ENCODE measurements at regions of chr15 and their contacts with region 1.

Region 1: DNA sequence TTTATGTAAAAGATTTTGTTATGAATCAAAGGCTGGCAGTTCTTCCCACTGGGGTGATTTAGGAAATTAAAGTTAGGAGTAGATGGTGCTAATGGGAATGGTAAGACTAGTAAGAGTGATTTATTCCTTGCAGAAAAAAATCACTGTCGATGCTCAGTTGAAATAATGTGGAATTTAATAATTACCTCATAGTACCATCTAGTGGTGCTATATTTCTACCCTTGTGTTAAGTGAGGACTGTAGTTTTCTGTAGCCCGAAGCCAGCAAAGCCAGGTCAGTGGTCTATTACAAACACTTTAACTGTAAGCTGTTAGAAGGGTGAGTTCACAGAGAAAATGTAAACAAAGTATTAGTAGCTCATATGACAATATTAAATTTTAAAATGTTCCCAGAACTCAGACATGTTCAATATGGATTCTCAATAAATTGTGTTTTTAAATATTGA is 39.5 kb upstream of the GOLGA8J start:
- DNase-seq: no peak
- H3K4me3 ChIP-seq: no peak overlapping the region
- H3K27ac ChIP-seq: no peak overlapping the region
- H3K4me1 ChIP-seq: no peaks in the 10 kb centered on the region
- H3K27me3 ChIP-seq: no peaks in the 10 kb centered on the region
- CTCF ChIP-seq: peak; percentile 36 to 53 (median 45)
- POLR2A ChIP-seq: no peak

Region 2: GRCh38 chr15:29674661-29675533 is 368.3 kb before region 1 on chr15:
- intact Hi-C with region 1: loop called (anchors 10 kb)
- DNase-seq: peak; percentile 29 to 39
- H3K4me3 ChIP-seq: peak overlapping the region; percentile 27 to 44
- H3K27ac ChIP-seq: no peak overlapping the region
- H3K4me1 ChIP-seq: no peaks in the 10 kb centered on the region
- H3K27me3 ChIP-seq: no peaks in the 10 kb centered on the region
- CTCF ChIP-seq: no peak
- POLR2A ChIP-seq: no peak

Region 3: DNA sequence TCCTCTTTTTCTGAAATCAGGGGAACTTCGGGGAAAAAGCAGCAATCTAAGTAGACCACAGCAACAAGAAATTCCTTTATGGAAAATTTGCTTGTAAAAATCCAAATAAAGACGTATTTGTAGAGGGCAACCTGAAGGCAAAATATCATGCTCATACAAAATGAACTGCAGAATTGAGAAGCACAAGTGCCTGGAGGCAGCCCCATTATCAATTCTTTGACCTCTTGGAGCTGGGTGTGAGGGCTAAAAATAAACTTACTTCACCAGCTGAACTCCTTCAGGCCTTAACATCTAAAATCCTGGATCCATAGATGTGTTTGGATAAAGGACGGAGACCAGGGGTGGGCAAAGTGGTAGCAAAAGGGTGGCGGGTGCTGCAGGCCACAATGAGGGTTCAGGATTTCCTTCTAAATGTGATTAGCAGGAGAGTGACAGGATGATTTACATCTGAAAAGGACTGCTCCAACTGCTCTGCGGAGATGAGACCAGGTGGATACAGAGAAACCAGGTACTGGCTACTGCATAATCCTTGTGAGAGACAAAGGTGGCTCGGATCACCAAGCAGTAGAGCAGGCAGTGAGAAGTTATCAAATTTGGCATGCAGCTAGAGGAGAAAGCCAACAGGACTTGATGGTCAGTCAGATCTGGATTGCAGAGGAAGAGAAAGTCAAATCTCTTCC is 139.3 kb before region 1 on chr15:
- intact Hi-C with region 1: no loop called
- DNase-seq: no peak
- H3K4me3 ChIP-seq: no peak overlapping the region
- H3K27ac ChIP-seq: no peak overlapping the region
- H3K4me1 ChIP-seq: no peaks in the 10 kb centered on the region
- H3K27me3 ChIP-seq: no peaks in the 10 kb centered on the region
- CTCF ChIP-seq: no peak
- POLR2A ChIP-seq: no peak

Region 4: GRCh38 chr15:30001602-30002001 is 41.6 kb before region 1 on chr15:
- intact Hi-C with region 1: no loop called
- DNase-seq: no peak
- H3K4me3 ChIP-seq: no peak overlapping the region
- H3K27ac ChIP-seq: no peak overlapping the region
- H3K4me1 ChIP-seq: no peaks in the 10 kb centered on the region
- H3K27me3 ChIP-seq: no peaks in the 10 kb centered on the region
- CTCF ChIP-seq: no peak
- POLR2A ChIP-seq: no peak